Heart left ventricle (tissue), 16 donors: ENCODE measurements at regions of chr12 and their contacts with region 1.

Region 1: GRCh38 chr12:42144408-42145196 is at the start of gene GXYLT1:
- DNase-seq: peak; percentile 94 to 97 (median 95)
- ATAC-seq: peak; percentile 95 to 99 (median 99)
- H3K4me3 ChIP-seq: peak within 1 kb of the TSS; percentile 67 to 96 (median 86)
- H3K27ac ChIP-seq: peak within 1 kb of the TSS; percentile 51 to 92 (median 86)
- H3K4me1 ChIP-seq: peaks cover 0 to 42% (median 20%) of the 10 kb centered on the region in 12 donors
- H3K27me3 ChIP-seq: no peaks in the 10 kb centered on the region
- CTCF ChIP-seq: peak in 1 of 12 donors; percentile 25
- POLR2A ChIP-seq: peak in 1 of 2 donors; percentile 86
- total RNA-seq, gene GXYLT1: 3.9 to 8.3 (median 6.3) TPM

Region 2: GRCh38 chr12:42237052-42237852 is 92.7 kb after region 1 on chr12:
- intact Hi-C with region 1: loop called (anchors 1 to 5 kb)
- DNase-seq: peak; percentile 75 to 89 (median 82)
- ATAC-seq: peak; percentile 67 to 83 (median 75)
- H3K4me3 ChIP-seq: peak overlapping the region; percentile 56 to 98 (median 78)
- H3K27ac ChIP-seq: peak overlapping the region; percentile 82 to 97 (median 94)
- H3K4me1 ChIP-seq: peaks cover 0 to 57% (median 29%) of the 10 kb centered on the region in 12 donors
- H3K27me3 ChIP-seq: no peaks in the 10 kb centered on the region
- CTCF ChIP-seq: peak in 9 of 12 donors; percentile 10 to 60 (median 44)
- POLR2A ChIP-seq: no peak

Region 3: DNA sequence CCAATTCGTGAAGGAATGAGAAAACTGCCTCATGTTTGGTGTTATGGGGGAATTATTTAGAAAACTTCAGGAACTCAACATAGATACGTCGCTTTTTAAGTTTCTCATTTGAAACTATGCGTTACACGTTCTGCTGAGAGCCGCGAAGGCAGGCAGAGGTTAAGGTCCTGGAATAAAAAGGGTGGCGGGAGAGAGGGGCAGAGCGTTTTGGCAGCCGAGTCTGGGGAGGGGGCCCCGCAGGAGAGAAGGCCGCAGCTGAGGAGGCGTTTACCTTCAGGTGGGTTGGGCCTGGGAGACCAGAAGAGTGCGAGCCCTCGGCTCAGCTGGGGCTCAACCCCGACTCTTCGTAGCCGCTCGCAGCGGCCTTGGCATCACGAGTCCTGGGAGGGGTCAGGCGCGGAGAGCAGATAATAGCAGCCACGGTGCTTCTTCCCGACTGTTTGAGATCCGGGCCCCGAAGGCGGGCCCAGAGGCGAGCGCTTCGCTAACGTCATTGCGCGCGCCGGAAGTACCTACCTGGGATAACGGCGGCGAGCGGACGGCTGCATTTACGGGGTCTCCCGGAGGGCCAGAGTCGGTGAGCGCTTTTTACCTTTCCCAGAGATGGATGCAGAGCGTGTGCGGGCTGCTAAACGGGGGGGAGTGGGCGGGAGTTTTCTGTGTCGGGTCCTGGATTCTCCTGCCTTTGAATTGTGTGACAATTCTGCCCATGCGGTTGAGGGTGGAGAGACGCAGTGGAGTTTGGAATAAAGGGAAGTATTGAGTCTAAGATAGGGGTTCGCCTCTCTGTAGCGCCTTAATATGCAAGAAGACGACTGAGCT is 181.3 kb after region 1 on chr12 and contains the starts of genes PPHLN1 and ZCRB1:
- intact Hi-C with region 1: loop called in 3 of 10 experiments (anchors 5 kb)
- DNase-seq: peak; percentile 83 to 89 (median 88)
- ATAC-seq: peak; percentile 94 to 98 (median 98)
- H3K4me3 ChIP-seq: peak within 1 kb of the TSS; percentile 47 to 96 (median 76)
- H3K27ac ChIP-seq: peak within 1 kb of the TSS; percentile 43 to 90 (median 82)
- H3K4me1 ChIP-seq: peaks cover 4 to 38% (median 25%) of the 10 kb centered on the region in 12 donors
- H3K27me3 ChIP-seq: no peaks in the 10 kb centered on the region
- CTCF ChIP-seq: no peak
- POLR2A ChIP-seq: peak in 1 of 2 donors; percentile 60
- total RNA-seq, gene PPHLN1: 25.5 to 41.1 (median 35.6) TPM
- total RNA-seq, gene ZCRB1: 30.8 to 69.0 (median 56.2) TPM

Region 4: GRCh38 chr12:42469355-42470175 is 325.0 kb after region 1 on chr12:
- intact Hi-C with region 1: loop called in 1 of 10 experiments (anchors 10 kb)
- DNase-seq: no peak
- ATAC-seq: peak in 1 of 4 donors; percentile 31
- H3K4me3 ChIP-seq: peak overlapping the region in 5 of 12 donors; percentile 3 to 52 (median 7)
- H3K27ac ChIP-seq: peak overlapping the region in 5 of 12 donors; percentile 32 to 67 (median 61)
- H3K4me1 ChIP-seq: peaks cover 3 to 64% (median 37%) of the 10 kb centered on the region in 12 donors
- H3K27me3 ChIP-seq: no peaks in the 10 kb centered on the region
- CTCF ChIP-seq: no peak
- POLR2A ChIP-seq: no peak

Region 5: GRCh38 chr12:42574851-42575266 is 430.3 kb after region 1 on chr12:
- intact Hi-C with region 1: loop called in 2 of 10 experiments (anchors 10 kb)
- DNase-seq: no peak
- ATAC-seq: no peak
- H3K4me3 ChIP-seq: no peak overlapping the region
- H3K27ac ChIP-seq: peak overlapping the region in 1 of 12 donors; percentile 22
- H3K4me1 ChIP-seq: peaks cover 0 to 57% (median 29%) of the 10 kb centered on the region in 12 donors
- H3K27me3 ChIP-seq: no peaks in the 10 kb centered on the region
- CTCF ChIP-seq: no peak
- POLR2A ChIP-seq: no peak